ENCODE measurements at regions of chr19 and their contacts with region 1.

Region 1: DNA sequence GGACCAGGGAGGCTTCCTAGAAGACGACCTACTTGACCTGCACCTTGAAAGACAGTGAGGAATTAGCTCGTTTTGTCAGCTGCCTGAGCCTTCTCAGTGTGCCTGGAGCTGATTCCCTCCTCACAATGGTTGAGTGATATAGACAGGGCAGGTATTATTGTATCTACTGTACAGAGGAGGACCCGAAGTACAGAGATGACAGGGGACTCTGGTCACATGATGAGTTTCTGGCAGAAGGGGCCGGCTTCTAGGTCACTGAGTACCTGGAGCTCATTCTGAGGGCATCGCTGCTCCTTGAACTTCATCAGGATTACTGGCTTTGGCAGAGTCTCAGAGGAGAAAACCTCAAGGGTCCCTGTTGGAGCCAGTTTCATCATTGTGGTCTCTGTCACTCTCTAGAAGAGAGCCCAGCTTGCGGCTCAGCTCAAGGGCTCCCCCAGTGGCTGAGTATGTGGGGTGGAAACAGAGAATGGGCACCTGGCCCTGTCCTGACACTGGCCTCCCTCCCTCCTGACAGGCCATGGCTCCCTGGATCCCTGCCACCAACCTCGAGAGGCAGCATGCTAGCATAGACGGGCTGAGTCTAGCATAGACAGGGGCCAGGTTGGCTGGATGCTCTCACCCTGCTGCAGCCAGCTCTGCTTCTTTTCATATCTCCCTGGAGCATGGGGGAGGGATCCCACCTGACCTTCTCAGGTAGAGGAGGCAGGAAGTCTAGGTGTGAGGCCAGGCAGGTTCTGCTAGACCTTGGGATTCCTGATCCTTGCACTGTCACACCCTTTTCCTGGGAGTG is 38.7 kb downstream of the NFIX start:
- DNase-seq: peak; percentile 63
- ATAC-seq: peak; percentile 73
- H3K4me3 Mint-ChIP-seq: no peak overlapping the region
- H3K27ac Mint-ChIP-seq: no peak overlapping the region
- H3K4me1 Mint-ChIP-seq: peaks cover 16% of the 10 kb centered on the region
- H3K27me3 Mint-ChIP-seq: peaks cover 11% of the 10 kb centered on the region

Region 2: GRCh38 chr19:12983542-12984142 is 50.4 kb before region 1 on chr19:
- CTCF ChIA-PET with region 1: interaction called, 22 read pairs
- DNase-seq: peak; percentile 77
- ATAC-seq: peak; percentile 77
- H3K4me3 Mint-ChIP-seq: no peak overlapping the region
- H3K27ac Mint-ChIP-seq: no peak overlapping the region
- H3K4me1 Mint-ChIP-seq: peaks cover 2% of the 10 kb centered on the region
- H3K27me3 Mint-ChIP-seq: peaks cover 7% of the 10 kb centered on the region

Region 3: GRCh38 chr19:13044231-13044836 is 10.3 kb after region 1 on chr19:
- CTCF ChIA-PET with region 1: interaction called, 14 read pairs
- DNase-seq: peak; percentile 56
- ATAC-seq: peak; percentile 75
- H3K4me3 Mint-ChIP-seq: no peak overlapping the region
- H3K27ac Mint-ChIP-seq: no peak overlapping the region
- H3K4me1 Mint-ChIP-seq: peaks cover 24% of the 10 kb centered on the region
- H3K27me3 Mint-ChIP-seq: peaks cover 12% of the 10 kb centered on the region

Region 4: GRCh38 chr19:13104848-13105711 is 71.1 kb after region 1 on chr19:
- CTCF ChIA-PET with region 1: no interaction called
- DNase-seq: peak; percentile 59
- ATAC-seq: peak; percentile 27
- H3K4me3 Mint-ChIP-seq: peak overlapping the region; percentile 78
- H3K27ac Mint-ChIP-seq: peak overlapping the region; percentile 83
- H3K4me1 Mint-ChIP-seq: peaks cover 23% of the 10 kb centered on the region
- H3K27me3 Mint-ChIP-seq: peaks cover 2% of the 10 kb centered on the region

Region 5: DNA sequence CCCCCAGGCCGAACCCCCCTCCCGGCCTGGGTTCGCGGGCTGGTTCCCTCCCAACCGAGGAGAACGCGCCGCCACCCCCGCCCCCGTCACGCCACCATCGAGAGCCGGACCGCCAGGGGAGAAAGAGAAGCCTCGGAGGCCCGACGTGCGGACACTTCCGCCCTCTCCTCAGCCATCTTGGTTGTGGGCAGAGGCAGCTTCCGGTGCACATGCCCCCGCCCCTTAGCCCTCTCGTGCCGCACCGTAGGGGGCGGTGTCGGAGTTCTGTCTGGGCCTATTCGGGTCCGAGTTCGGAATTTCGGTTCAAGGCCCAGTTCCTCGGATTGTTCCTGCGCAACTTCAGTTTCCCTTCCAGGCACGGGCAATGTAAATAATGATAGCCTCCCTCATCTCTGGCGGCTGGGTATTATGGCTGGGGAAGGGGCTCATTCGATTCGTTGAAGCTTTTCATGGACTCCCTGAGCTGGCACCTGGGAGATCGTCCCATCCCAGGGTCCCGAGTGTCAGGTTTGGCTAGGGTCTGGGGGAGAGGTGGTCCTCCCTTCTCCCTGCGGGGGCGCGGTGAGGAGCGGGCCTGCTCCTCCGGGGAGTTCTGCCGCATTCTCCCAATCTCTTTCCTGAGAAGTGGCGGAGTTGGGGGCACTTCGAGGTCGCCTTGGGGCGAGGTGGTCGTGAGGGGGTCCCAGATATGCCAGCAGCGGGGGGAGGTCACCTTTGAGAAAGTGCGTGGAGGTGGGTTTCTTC is 116.3 kb after region 1 on chr19 and contains the starts of genes IER2 and STX10:
- CTCF ChIA-PET with region 1: no interaction called
- DNase-seq: peak; percentile 97
- ATAC-seq: peak; percentile 51
- H3K4me3 Mint-ChIP-seq: peak within 1 kb of the TSS; percentile 96
- H3K27ac Mint-ChIP-seq: peak within 1 kb of the TSS; percentile 91
- H3K4me1 Mint-ChIP-seq: peaks cover 19% of the 10 kb centered on the region
- H3K27me3 Mint-ChIP-seq: no peaks in the 10 kb centered on the region
- total RNA-seq, gene IER2: 148 to 209 TPM
- total RNA-seq, gene STX10: 58.6 to 70.1 TPM